Activated CD8-positive, alpha-beta T cell treated with anti-CD3 and anti-CD28 coated beads for 36 hours (primary cell): ENCODE measurements at regions of chr18 and their contacts with region 1.

Region 1: GRCh38 chr18:77101410-77102258 is 30.9 kb downstream of the MBP start:
- DNase-seq: peak; percentile 78
- ATAC-seq: peak; percentile 60
- H3K4me3 Mint-ChIP-seq: peak overlapping the region; percentile 63
- H3K27ac Mint-ChIP-seq: peak overlapping the region; percentile 95
- H3K4me1 Mint-ChIP-seq: peaks cover 93% of the 10 kb centered on the region
- H3K27me3 Mint-ChIP-seq: no peaks in the 10 kb centered on the region
- CTCF ChIP-seq: no peak

Region 2: DNA sequence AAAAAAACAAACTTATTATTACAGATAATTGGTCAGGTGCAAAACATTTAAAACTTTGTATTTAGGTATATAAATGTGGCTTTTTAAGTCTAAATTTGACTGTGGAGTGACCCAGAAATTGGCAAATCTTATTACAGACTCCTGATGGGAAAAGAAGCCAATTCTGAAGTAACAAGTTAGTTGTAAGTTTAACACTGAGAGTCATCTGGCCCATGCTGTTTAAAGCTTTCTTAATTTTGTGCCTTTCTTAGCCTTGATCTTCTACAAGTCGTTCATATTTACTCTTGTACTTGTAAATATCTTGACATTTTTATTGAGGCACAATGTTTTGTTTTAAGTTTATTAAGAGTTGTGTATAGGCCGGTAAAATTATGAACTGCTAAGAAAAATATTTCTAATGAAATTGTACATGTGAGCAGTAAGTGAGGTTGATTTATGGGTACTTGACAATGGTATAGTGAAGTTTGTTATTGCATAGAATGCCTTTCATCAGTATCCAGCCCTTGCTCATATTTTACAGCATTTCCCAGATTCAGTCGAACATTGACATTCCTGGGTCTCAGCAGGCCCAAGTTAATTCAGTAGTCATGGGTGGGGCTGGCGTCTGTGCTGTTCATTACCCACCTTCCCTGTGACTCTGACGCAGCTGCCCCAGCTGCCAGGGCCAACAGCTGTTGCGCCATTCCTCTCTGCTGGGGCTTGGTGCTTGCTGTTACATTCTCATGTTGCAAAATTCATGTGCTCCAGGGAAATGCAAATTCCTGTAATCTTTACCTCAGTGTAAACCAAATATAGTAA is 157.9 kb before region 1 on chr18:
- CTCF ChIA-PET with region 1: no interaction called
- POLR2A ChIA-PET with region 1: no interaction called
- intact Hi-C with region 1: no loop called
- DNase-seq: no peak
- ATAC-seq: no peak
- H3K4me3 Mint-ChIP-seq: no peak overlapping the region
- H3K27ac Mint-ChIP-seq: no peak overlapping the region
- H3K4me1 Mint-ChIP-seq: peaks cover 14% of the 10 kb centered on the region
- H3K27me3 Mint-ChIP-seq: no peaks in the 10 kb centered on the region
- CTCF ChIP-seq: no peak

Region 3: GRCh38 chr18:77061946-77062517 is 39.6 kb before region 1 on chr18:
- CTCF ChIA-PET with region 1: interaction called, 19 read pairs
- POLR2A ChIA-PET with region 1: interaction called, 42 read pairs
- intact Hi-C with region 1: loop called (anchors 2 kb)
- DNase-seq: peak; percentile 28
- ATAC-seq: peak; percentile 40
- H3K4me3 Mint-ChIP-seq: peak overlapping the region; percentile 40
- H3K27ac Mint-ChIP-seq: peak overlapping the region; percentile 98
- H3K4me1 Mint-ChIP-seq: peaks cover 82% of the 10 kb centered on the region
- H3K27me3 Mint-ChIP-seq: no peaks in the 10 kb centered on the region
- CTCF ChIP-seq: no peak

Region 4: GRCh38 chr18:77067291-77068061 is 34.2 kb before region 1 on chr18:
- CTCF ChIA-PET with region 1: interaction called, 19 read pairs
- POLR2A ChIA-PET with region 1: interaction called, 42 read pairs
- intact Hi-C with region 1: loop called (anchors 2 kb)
- DNase-seq: peak; percentile 86
- ATAC-seq: peak; percentile 55
- H3K4me3 Mint-ChIP-seq: peak overlapping the region; percentile 43
- H3K27ac Mint-ChIP-seq: peak overlapping the region; percentile 92
- H3K4me1 Mint-ChIP-seq: peaks cover 98% of the 10 kb centered on the region
- H3K27me3 Mint-ChIP-seq: no peaks in the 10 kb centered on the region
- CTCF ChIP-seq: no peak

Region 5: GRCh38 chr18:77114415-77115191 is 13.0 kb after region 1 on chr18:
- CTCF ChIA-PET with region 1: interaction called, 6 read pairs
- POLR2A ChIA-PET with region 1: interaction called, 337 read pairs
- intact Hi-C with region 1: no loop called
- DNase-seq: peak; percentile 70
- ATAC-seq: peak; percentile 77
- H3K4me3 Mint-ChIP-seq: no peak overlapping the region
- H3K27ac Mint-ChIP-seq: peak overlapping the region; percentile 71
- H3K4me1 Mint-ChIP-seq: peaks cover 84% of the 10 kb centered on the region
- H3K27me3 Mint-ChIP-seq: no peaks in the 10 kb centered on the region
- CTCF ChIP-seq: no peak

Region 6: DNA sequence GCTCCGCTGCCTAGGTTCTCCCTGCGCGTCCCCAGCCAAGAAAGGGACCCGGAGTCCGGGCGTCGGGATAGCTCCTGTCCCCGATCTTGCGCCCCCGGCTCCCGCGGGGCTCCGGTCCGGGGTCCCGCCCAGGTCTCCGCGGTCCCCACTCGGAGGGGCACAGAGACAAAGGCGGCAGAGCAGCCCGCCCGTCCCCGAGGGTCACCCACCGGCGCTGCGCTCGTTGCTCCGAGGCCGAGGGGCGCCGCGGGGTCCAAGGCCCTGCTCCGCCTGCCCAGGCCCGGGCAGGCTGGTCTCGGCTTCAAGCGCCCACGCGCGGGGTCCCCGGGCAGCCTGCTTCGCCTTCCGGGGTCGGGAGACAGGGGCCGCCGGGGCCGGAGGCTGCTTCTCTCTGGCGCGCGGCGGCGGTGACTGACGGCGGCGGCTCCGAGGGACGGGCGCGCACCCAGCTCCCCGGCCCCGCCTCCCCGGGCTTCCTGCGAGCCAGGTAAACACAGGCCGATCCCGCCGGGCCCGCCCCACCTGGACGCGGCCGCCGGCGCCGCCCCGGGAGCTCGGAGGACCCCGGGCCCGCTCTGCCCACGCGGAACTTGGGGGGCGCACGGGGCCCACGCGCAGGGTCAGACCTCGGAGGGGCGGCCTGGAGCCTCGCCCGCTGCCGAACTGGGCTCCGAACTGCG is 30.9 kb after region 1 on chr18 and contains the start of gene MBP:
- CTCF ChIA-PET with region 1: interaction called, 92 read pairs
- POLR2A ChIA-PET with region 1: interaction called, 337 read pairs
- intact Hi-C with region 1: no loop called
- DNase-seq: peak; percentile 79
- ATAC-seq: peak; percentile 63
- H3K4me3 Mint-ChIP-seq: peak within 1 kb of the TSS; percentile 99
- H3K27ac Mint-ChIP-seq: peak within 1 kb of the TSS; percentile 98
- H3K4me1 Mint-ChIP-seq: peaks cover 43% of the 10 kb centered on the region
- H3K27me3 Mint-ChIP-seq: no peaks in the 10 kb centered on the region
- CTCF ChIP-seq: no peak
- total RNA-seq, gene MBP: 39.9 to 41.5 TPM

Region 7: DNA sequence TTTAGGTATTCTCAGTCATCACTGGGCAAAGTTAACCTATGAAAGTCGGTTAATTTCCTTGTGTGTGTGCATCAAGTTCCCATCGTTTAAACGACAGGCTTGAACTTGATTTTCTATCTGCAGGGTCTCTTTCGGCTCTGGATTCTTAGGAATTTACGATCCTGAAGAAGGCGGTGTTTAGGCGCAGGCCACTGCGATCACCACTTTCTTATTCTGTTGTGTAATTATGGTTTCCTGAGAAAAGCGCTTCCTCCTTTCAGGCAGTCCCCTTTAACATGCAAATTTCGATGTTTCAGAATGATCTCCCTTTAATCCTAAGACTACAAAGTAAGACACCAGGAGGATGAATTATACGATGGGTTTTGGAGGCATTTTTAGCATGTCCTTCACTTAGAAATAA is 58.9 kb after region 1 on chr18:
- CTCF ChIA-PET with region 1: no interaction called
- POLR2A ChIA-PET with region 1: no interaction called
- intact Hi-C with region 1: no loop called
- DNase-seq: no peak
- ATAC-seq: no peak
- H3K4me3 Mint-ChIP-seq: no peak overlapping the region
- H3K27ac Mint-ChIP-seq: no peak overlapping the region
- H3K4me1 Mint-ChIP-seq: peaks cover 6% of the 10 kb centered on the region
- H3K27me3 Mint-ChIP-seq: peaks cover 1% of the 10 kb centered on the region
- CTCF ChIP-seq: no peak